ENCODE measurements at regions of chr5 and their contacts with region 1.

Region 1: DNA sequence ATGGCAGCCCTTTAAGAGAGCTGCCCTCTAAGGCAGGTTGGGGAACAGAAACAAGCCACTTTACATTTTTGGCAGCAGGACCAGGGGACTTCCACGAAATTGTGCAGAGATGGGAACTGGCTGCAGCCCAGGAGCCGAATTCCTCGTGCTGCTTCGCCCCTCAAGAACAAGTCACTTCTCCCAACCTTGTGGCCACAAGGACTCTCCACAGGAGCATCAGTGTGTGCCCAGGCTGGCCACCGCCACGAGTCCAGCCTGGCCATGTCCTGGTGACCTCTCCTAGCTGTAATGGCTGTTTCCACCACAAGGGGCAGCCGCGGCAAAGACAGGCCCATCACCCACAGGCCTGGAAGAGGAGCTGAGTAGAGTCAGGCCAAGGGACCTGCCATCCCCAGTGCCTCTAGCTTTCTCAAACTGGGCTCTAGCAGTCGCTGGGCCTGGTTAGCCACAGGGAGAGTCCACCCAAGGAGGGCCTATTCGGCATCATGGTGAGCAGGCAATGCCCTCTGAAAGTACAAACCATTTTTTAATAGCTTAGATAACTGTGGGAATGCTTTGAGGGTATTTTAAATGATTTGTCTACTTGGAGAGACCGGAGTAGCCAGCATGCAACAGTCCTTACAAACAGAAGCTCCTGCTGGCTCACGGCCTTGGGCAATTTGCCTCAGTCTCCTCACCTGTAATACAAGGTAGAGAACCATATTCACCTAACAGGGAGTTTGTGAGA is 129.0 kb downstream of the COL23A1 start:
- DNase-seq: peak; percentile 94
- ATAC-seq: peak; percentile 96
- H3K4me3 Mint-ChIP-seq: no peak overlapping the region
- H3K27ac Mint-ChIP-seq: no peak overlapping the region
- H3K4me1 Mint-ChIP-seq: peaks cover 33% of the 10 kb centered on the region
- H3K27me3 Mint-ChIP-seq: no peaks in the 10 kb centered on the region
- CTCF ChIP-seq: peak; percentile 92

Region 2: DNA sequence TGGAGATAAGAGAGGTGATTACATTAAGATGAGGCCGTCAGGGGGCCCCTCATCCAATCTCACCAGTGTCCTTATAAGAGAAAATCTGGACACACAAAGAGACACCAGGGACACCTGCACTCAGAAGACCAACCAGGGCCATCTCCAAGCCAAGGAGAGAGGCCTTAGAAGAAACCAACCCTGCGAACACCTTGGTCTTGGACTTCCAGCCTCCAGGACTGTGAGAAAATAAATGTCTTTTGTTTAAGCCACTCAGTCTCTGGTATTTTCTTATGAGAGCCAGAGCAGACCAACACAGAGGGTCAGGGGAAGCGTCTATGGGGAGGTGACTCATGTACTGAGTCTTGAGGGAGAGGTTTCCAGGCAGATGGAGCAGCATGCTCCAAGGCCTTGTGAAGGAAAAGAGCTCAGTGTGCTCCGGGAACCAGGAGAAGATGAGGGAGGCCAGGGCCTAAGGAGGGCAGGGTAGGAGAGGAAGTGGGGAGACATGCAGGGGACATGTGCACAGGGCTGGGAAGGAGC is 234.0 kb before region 1 on chr5:
- CTCF ChIA-PET with region 1: no interaction called
- POLR2A ChIA-PET with region 1: no interaction called
- DNase-seq: no peak
- ATAC-seq: no peak
- H3K4me3 Mint-ChIP-seq: no peak overlapping the region
- H3K27ac Mint-ChIP-seq: no peak overlapping the region; the same call in 1 of the 2 replicates
- H3K4me1 Mint-ChIP-seq: peaks cover 31% of the 10 kb centered on the region
- H3K27me3 Mint-ChIP-seq: no peaks in the 10 kb centered on the region
- CTCF ChIP-seq: no peak

Region 3: GRCh38 chr5:178360222-178360925 is 100.8 kb before region 1 on chr5:
- CTCF ChIA-PET with region 1: interaction called, 10 read pairs
- POLR2A ChIA-PET with region 1: no interaction called
- DNase-seq: no peak
- ATAC-seq: no peak
- H3K4me3 Mint-ChIP-seq: no peak overlapping the region
- H3K27ac Mint-ChIP-seq: 0 out of 2 replicates have a peak overlapping the region, but pooled peaks have one; percentile 29
- H3K4me1 Mint-ChIP-seq: peaks cover 34% of the 10 kb centered on the region
- H3K27me3 Mint-ChIP-seq: no peaks in the 10 kb centered on the region
- CTCF ChIP-seq: no peak

Region 4: DNA sequence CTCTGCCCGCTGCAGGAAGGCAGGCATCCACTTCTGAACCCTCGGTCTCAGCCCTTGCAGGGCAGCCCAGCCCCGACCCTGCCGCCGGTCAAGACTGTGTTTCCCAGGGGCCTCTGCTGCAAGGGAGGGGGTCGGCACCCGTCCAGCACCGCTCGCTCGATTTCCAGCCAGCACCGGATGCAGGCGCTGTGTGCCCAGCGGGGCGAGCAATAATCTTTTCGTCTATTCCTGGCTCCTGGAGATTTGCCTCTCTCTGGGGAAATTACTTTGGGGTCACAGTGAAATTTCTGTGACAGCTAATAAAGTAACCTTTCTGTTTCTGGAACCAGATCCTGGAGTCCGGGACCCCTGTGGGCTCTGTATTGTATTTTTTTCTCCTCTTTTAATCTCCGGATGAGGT is 26.3 kb before region 1 on chr5:
- CTCF ChIA-PET with region 1: interaction called, 15 read pairs
- POLR2A ChIA-PET with region 1: no interaction called
- DNase-seq: no peak
- ATAC-seq: no peak
- H3K4me3 Mint-ChIP-seq: no peak overlapping the region
- H3K27ac Mint-ChIP-seq: no peak overlapping the region
- H3K4me1 Mint-ChIP-seq: peaks cover 18% of the 10 kb centered on the region
- H3K27me3 Mint-ChIP-seq: no peaks in the 10 kb centered on the region
- CTCF ChIP-seq: no peak

Region 5: DNA sequence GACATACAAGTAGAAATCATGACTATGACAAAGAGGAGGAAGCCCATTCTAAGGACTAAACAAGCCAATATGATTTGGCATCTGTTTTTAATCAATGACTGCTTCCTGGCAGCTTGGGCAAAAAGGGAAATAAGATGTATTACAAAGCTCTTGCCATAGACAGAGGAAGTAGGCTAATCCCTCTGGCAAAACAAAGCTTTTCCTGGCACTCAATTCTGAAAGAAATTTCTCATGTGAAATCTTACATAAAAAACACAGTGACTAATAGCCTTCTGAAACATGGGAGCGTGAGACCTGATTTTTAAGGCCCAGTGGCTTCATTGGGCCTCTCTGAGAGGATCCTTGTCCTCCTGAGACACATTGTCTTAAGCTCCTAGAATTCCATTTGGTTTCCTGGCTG is 35.5 kb after region 1 on chr5:
- CTCF ChIA-PET with region 1: interaction called, 10 read pairs
- POLR2A ChIA-PET with region 1: no interaction called
- DNase-seq: no peak
- ATAC-seq: no peak
- H3K4me3 Mint-ChIP-seq: no peak overlapping the region
- H3K27ac Mint-ChIP-seq: no peak overlapping the region
- H3K4me1 Mint-ChIP-seq: no peaks in the 10 kb centered on the region
- H3K27me3 Mint-ChIP-seq: no peaks in the 10 kb centered on the region
- CTCF ChIP-seq: no peak

Region 6: GRCh38 chr5:178551059-178551458 is 89.9 kb after region 1 on chr5:
- CTCF ChIA-PET with region 1: interaction called, 55 read pairs
- POLR2A ChIA-PET with region 1: no interaction called
- DNase-seq: no peak
- ATAC-seq: no peak
- H3K4me3 Mint-ChIP-seq: no peak overlapping the region
- H3K27ac Mint-ChIP-seq: no peak overlapping the region
- H3K4me1 Mint-ChIP-seq: peaks cover 54% of the 10 kb centered on the region
- H3K27me3 Mint-ChIP-seq: no peaks in the 10 kb centered on the region
- CTCF ChIP-seq: no peak

Measured in WTC11 (cell line).